Heart right ventricle (tissue), 16 donors: ENCODE measurements at regions of chr1 and their contacts with region 1.

Region 1: DNA sequence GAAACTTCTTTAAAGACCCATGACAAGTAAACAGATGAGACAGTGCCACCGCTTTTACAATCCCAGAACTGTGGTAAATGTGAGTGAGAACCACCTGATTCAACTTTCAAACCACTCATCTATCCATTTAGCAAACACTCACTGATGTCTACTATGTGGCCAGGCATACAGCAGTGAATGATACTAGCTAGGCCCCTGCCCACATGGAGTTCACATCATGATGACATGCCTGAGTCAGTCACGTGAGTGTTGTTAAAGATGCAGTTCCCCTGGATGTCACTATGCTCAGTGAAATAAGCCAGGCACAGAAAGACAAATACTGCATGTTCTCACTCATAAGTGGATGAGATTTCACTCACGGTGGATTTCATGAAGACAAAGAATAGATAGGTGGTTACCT is 28.4 kb downstream of the STX6 start:
- DNase-seq: no peak
- ATAC-seq: peak in 4 of 8 donors; percentile 35 to 71 (median 65)
- H3K4me3 ChIP-seq: no peak overlapping the region
- H3K27ac ChIP-seq: no peak overlapping the region
- H3K4me1 ChIP-seq: peaks cover 0 to 9% (median 0%) of the 10 kb centered on the region in 9 donors
- H3K27me3 ChIP-seq: no peaks in the 10 kb centered on the region
- CTCF ChIP-seq: no peak

Region 2: DNA sequence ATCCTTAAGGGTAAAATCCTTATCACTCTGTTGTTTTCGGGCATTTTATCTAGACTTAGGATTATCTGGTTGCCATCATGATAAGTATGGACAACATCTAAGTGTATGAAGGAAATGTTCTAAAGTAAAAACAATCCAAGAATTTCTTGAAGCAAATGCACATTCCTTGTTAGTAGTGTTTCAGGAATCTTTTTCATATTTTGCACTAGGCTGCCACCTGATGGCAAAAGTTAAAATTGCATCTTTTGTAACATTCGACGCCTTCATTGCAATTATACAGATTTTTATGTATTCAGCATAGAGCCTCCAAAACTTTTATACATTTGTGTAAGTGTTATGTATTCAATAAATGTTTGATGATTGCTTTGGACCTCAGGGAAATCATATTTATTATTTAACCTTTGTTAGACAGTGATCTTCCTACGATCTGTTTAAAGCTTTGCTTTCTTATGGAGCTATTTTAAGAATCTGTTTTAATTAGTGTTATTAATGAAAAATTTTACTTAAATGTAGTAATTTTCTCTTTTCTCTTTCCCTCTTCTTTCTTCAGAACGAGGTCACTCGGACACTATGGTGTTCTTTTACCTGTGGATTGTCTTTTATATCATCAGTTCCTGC is 131.0 kb before region 1 on chr1:
- intact Hi-C with region 1: no loop called
- DNase-seq: peak in 1 of 2 donors; percentile 24
- ATAC-seq: peak in 2 of 8 donors; percentile 33 to 41
- H3K4me3 ChIP-seq: no peak overlapping the region
- H3K27ac ChIP-seq: peak overlapping the region in 1 of 10 donors; percentile 16
- H3K4me1 ChIP-seq: peaks cover 0 to 15% (median 0%) of the 10 kb centered on the region in 9 donors
- H3K27me3 ChIP-seq: no peaks in the 10 kb centered on the region
- CTCF ChIP-seq: peak; percentile 59 to 88 (median 79)

Region 3: GRCh38 chr1:180954005-180954800 is 40.1 kb before region 1 on chr1:
- intact Hi-C with region 1: loop called in 1 of 10 experiments (anchors 5 kb)
- DNase-seq: peak; percentile 44 to 78
- ATAC-seq: peak; percentile 78 to 91 (median 82)
- H3K4me3 ChIP-seq: peak overlapping the region; percentile 39 to 73 (median 58)
- H3K27ac ChIP-seq: peak overlapping the region in 9 of 10 donors; percentile 0 to 44 (median 34)
- H3K4me1 ChIP-seq: peaks cover 0 to 23% (median 13%) of the 10 kb centered on the region in 9 donors
- H3K27me3 ChIP-seq: no peaks in the 10 kb centered on the region
- CTCF ChIP-seq: peak in 6 of 9 donors; percentile 5 to 37 (median 27)

Region 4: DNA sequence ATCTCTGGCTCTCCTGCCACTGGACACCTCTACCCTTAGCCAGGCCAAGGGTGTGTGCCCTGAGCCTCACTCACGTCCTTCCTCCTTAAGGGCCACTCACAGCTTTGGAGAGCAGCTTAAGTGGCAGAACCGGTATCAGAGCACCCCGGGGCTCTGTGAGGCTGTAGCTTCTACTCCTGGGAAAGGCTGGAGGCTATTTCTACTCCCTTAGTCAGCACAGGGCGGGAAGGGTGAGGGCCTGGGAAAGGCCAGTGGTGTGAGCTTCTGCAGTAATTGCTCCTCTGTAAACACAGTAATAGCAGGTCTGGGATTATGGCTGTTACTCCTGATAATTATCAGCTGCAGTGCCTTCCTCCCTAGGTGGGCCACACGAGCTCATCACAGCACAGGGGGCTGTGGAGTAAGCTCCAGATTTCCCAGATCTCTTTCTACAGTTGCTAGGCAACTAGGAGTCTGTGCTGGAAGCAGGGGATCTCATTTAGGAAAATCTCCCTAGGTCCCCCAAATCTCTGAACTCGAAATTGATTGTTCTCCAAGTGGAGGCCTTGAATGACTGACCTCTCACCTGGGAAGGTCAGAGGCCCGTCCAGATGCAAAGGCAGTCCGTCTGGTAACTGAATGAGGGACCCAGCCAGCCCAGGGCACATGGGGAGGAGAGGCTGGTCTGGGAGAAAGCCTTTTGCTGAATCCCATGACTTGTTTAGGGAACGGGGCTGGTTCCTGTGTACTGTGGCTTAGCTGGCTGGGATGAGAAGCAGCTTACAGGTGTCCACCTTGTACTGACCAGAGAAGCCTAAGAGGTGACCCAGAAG is 123.6 kb after region 1 on chr1:
- intact Hi-C with region 1: no loop called
- DNase-seq: no peak
- ATAC-seq: peak in 4 of 8 donors; percentile 26 to 49 (median 42)
- H3K4me3 ChIP-seq: no peak overlapping the region
- H3K27ac ChIP-seq: peak overlapping the region in 6 of 10 donors; percentile 13 to 48 (median 23)
- H3K4me1 ChIP-seq: peaks cover 5 to 23% (median 13%) of the 10 kb centered on the region in 9 donors
- H3K27me3 ChIP-seq: no peaks in the 10 kb centered on the region
- CTCF ChIP-seq: no peak

Region 5: GRCh38 chr1:181318022-181318857 is 324.0 kb after region 1 on chr1:
- intact Hi-C with region 1: no loop called
- DNase-seq: no peak
- ATAC-seq: peak in 4 of 8 donors; percentile 13 to 25 (median 23)
- H3K4me3 ChIP-seq: peak overlapping the region in 3 of 10 donors; percentile 3 to 24 (median 15)
- H3K27ac ChIP-seq: no peak overlapping the region
- H3K4me1 ChIP-seq: peaks cover 0 to 23% (median 6%) of the 10 kb centered on the region in 9 donors
- H3K27me3 ChIP-seq: peaks cover 5 to 89% (median 82%) of the 10 kb centered on the region in 7 donors
- CTCF ChIP-seq: no peak

Region 6: GRCh38 chr1:181743878-181744312 is 749.6 kb after region 1 on chr1:
- intact Hi-C with region 1: no loop called
- DNase-seq: peak in 1 of 2 donors; percentile 51
- ATAC-seq: peak in 3 of 8 donors; percentile 21 to 93 (median 55)
- H3K4me3 ChIP-seq: no peak overlapping the region
- H3K27ac ChIP-seq: no peak overlapping the region
- H3K4me1 ChIP-seq: peaks cover 0 to 12% (median 0%) of the 10 kb centered on the region in 9 donors
- H3K27me3 ChIP-seq: no peaks in the 10 kb centered on the region
- CTCF ChIP-seq: no peak